Dendritic cell treated with granulocyte-macrophage colony-stimulating factor and Interleukin-4, amounts not matched to agents 40 ng/mL and 50 ng/mL, for 4 days (primary cell): ENCODE measurements at regions of chr18 and their contacts with region 1.

Region 1: GRCh38 chr18:63848159-63848558 is 39.3 kb upstream of the SERPINB2 start:
- H3K4me3 Mint-ChIP-seq: no peak overlapping the region
- H3K27ac Mint-ChIP-seq: no peak overlapping the region
- H3K4me1 Mint-ChIP-seq: no peaks in the 10 kb centered on the region
- H3K27me3 Mint-ChIP-seq: no peaks in the 10 kb centered on the region

Region 2: GRCh38 chr18:63578357-63578958 is 269.7 kb before region 1 on chr18:
- intact Hi-C with region 1: loop called (anchors 5 kb)
- H3K4me3 Mint-ChIP-seq: no peak overlapping the region
- H3K27ac Mint-ChIP-seq: no peak overlapping the region
- H3K4me1 Mint-ChIP-seq: peaks cover 28% of the 10 kb centered on the region
- H3K27me3 Mint-ChIP-seq: no peaks in the 10 kb centered on the region

Region 3: DNA sequence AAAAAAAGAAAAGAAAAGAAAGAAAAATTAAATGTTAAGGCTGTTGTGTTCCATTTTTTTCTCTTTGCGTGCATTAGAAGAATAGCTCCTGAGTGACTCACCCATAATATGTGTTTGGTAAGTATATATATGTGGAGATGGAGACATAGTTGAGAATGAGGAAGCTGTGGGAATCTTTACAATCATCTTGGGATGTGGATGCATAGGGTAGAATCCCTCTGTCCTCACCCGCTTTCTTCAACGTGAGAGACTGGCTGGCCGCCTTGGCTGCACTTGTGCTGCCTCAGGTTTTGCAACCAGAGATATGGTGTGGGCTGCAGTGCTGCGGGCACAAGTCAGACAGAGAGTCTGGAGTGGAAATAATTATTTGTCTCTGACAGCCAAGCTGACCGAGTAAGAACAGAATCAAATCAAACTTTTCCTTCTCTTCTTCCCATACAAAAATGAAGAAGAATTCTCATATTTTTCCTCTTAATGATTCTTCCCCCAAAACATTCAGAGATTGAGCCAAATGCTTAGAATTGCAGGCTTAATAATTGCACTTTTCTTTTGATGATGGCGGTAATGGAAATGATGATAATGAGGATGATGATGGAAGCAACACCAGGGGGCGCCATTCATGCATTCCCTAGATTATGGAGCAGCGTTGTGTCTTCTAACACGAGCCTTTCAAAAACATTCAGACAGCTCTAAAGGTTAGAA is 24.5 kb before region 1 on chr18:
- intact Hi-C with region 1: loop called (anchors 1 kb)
- H3K4me3 Mint-ChIP-seq: no peak overlapping the region
- H3K27ac Mint-ChIP-seq: no peak overlapping the region
- H3K4me1 Mint-ChIP-seq: no peaks in the 10 kb centered on the region
- H3K27me3 Mint-ChIP-seq: no peaks in the 10 kb centered on the region

Region 4: GRCh38 chr18:64082054-64082453 is 233.9 kb after region 1 on chr18:
- intact Hi-C with region 1: no loop called
- H3K4me3 Mint-ChIP-seq: no peak overlapping the region
- H3K27ac Mint-ChIP-seq: no peak overlapping the region
- H3K4me1 Mint-ChIP-seq: no peaks in the 10 kb centered on the region
- H3K27me3 Mint-ChIP-seq: no peaks in the 10 kb centered on the region